ENCODE measurements at regions of chr15 and their contacts with region 1.

Region 1: GRCh38 chr15:65916664-65917406 is 47.5 kb downstream of the RAB11A start:
- DNase-seq: no peak
- H3K4me3 ChIP-seq: no peak overlapping the region
- H3K27me3 ChIP-seq: no peaks in the 10 kb centered on the region
- CTCF ChIP-seq: peak; percentile 87

Region 2: DNA sequence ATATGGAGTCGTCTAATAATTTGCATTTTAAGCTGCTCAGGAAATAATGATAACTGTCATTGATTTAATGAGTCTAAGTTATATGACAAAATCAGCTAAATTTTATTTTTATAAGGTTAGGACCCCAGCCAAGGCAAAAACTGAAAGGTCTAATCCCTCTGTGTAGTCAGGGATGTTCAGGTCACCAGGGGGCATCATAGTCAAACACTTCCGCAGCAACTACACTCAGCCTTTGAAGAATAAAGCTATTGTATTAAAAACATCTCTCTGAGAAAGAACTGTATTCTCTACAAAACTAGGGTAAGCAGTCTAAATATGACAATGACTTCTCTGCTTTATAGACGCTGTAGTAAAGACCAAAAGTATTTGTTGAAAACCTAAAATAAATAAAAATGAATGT is 320.9 kb before region 1 on chr15:
- CTCF ChIA-PET with region 1: no interaction called
- POLR2A ChIA-PET with region 1: no interaction called
- DNase-seq: no peak
- H3K4me3 ChIP-seq: no peak overlapping the region
- H3K27me3 ChIP-seq: no peaks in the 10 kb centered on the region
- CTCF ChIP-seq: peak; percentile 26; the same call in 1 of the 2 replicates

Region 3: GRCh38 chr15:65655026-65655425 is 261.8 kb before region 1 on chr15:
- CTCF ChIA-PET with region 1: no interaction called
- POLR2A ChIA-PET with region 1: no interaction called
- DNase-seq: no peak
- H3K4me3 ChIP-seq: no peak overlapping the region
- H3K27me3 ChIP-seq: no peaks in the 10 kb centered on the region
- CTCF ChIP-seq: no peak

Region 4: DNA sequence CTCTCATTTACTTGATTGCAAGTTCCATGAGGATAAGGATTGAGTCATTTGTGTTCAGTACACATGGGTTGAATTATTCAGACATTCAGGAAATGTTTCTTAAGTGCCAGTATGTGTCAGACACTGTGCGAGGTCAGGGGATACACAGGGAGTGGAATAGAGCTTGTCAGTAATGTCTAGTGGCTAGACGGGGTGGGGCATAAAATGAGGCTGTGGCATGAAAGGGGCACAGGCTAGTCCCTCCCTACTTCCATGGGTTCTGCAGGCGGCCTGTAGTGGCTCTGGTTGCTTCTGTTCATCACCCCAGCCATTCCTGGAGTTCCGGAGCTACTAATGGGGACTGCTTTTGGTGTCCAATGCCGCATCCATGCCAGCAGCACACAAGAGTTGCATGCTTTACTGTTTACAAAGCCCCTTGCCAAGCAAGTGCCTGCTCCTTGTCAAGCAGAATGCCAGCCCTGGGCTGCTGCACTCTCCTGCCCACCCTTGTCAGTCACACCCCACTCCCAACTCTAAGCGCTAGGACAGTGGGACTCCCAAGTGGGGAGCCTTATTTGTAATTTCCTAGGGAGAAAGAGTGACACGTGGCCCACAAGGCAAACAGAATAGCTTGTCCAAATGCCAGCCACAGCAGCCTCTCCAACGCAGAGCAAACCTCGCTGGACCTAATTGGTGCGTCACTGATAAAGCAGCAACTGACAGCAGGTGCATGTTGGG is 23.2 kb after region 1 on chr15:
- CTCF ChIA-PET with region 1: interaction called, 13 read pairs
- POLR2A ChIA-PET with region 1: no interaction called
- DNase-seq: peak; percentile 94
- H3K4me3 ChIP-seq: no peak overlapping the region
- H3K27me3 ChIP-seq: no peaks in the 10 kb centered on the region
- CTCF ChIP-seq: no peak